Prostate gland (tissue), 2 donors: ENCODE measurements at regions of chr11 and their contacts with region 1.

Region 1: GRCh38 chr11:83249972-83250593 is 36.1 kb downstream of the CCDC90B start:
- DNase-seq: peak; percentile 8
- H3K4me3 ChIP-seq: no peak overlapping the region
- H3K27ac ChIP-seq: no peak overlapping the region
- H3K4me1 ChIP-seq: no peaks in the 10 kb centered on the region
- H3K27me3 ChIP-seq: no peaks in the 10 kb centered on the region
- CTCF ChIP-seq: peak in 3 of 4 experiments; percentile 57 to 74 (median 67)
- POLR2A ChIP-seq: no peak

Region 2: DNA sequence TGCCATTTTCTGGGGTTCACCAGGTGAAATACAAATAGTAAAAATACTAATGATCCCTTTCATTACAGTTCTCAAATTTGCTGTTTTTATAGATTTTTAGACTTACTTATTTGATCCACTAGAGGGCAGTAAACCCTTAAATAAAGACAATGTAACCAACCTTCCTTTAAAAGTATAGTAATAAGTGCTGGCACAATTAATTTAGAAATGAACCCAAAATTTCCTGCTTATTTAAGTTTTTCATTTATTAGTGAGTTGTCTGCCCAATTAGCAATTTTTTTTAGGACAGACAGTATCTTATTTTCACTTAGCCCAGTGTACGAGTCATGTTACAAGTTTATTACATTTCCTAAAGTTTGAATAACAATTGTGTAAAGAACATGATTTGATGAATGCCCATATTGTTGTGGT is 343.8 kb before region 1 on chr11:
- intact Hi-C with region 1: loop called (anchors 5 kb)
- DNase-seq: no peak
- H3K4me3 ChIP-seq: no peak overlapping the region
- H3K27ac ChIP-seq: no peak overlapping the region
- H3K4me1 ChIP-seq: no peaks in the 10 kb centered on the region
- H3K27me3 ChIP-seq: no peaks in the 10 kb centered on the region
- CTCF ChIP-seq: peak in 3 of 4 experiments; percentile 61 to 76 (median 62)
- POLR2A ChIP-seq: no peak